ENCODE measurements at regions of chr11 and their contacts with region 1.

Region 1: DNA sequence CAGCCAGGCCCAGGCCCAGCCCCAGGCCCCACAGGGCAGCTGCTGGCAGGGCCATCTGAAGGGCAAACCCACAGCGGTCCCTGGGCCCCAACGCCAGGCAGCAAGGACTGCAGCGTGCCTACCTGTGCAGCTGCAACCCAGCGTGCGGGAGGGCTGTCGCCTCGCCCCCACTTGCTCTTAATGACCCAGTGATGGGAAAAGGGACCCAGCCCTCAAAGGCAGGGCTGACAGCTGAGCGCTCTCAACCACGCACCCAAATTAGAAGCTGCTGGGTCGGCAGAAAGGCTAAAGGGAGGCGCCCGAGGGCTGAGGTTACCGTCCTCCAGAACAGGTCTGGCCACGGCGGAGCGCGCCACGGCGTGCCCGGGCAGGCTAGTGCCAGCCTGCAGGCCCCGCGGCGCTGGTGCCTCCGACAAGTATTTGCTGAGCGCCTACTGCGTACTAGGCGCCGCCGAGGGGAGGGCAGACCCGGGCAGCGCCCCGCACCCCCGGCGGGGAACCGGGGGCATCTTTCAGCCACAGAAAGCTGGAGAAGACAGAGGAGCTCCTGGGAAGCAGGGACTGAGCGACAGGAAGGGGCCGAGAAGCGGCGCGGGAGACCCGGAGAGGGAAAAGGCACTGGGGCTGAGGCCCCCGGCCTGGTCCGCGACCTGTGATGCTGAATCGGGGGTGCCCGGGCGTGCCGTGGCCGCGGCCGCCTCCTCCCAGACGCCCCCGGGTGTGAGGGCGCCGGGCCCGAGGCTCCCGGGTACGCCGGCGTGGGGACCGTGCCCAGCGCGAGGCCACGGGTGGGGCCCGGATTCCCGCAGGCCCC is 773 bp downstream of the HRAS start:
- DNase-seq: peak; percentile 79
- H3K27ac ChIP-seq: peak overlapping the region; percentile 99
- CTCF ChIP-seq: no peak

Region 2: DNA sequence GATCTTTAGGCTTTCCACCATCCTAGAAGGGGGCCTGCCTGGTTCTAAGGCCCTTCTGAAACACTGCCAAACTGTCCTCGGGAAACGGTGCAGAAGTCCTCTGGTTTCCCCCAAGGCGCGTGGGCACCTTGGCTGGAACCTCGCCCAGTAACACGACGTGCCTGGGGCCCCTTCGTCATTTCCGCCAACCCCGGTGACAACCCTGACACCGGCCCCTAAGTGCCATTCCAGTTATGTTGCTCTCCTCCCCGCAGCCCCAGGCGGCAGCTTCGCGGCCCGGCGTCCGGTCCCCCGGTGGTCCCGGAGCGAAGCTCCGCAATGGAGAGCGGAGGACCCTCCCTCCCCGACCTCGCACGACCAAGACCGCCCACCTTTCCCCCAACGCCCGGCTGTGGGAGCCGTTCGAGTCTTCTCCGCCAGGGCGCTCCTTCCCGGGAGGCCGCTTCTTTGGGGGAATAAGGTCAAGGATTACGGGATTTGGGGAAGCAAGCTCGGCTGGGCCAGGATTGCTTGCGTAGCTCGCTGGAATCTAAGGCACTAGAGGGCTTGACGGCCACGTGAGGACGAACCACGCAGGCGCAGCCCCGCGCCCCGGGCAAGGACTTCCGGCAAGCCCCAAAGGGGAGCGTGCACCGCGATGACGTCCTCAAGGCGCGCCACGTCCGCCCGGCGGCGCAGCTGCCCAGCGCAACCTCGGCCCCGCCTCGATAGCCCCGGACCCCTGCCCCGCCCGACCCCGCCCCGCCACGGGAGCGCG is 28.2 kb before region 1 on chr11:
- CTCF ChIA-PET with region 1: no interaction called
- POLR2A ChIA-PET with region 1: interaction called, 10 read pairs
- DNase-seq: peak; percentile 93
- H3K27ac ChIP-seq: peak overlapping the region; percentile 98
- CTCF ChIP-seq: no peak

Region 3: DNA sequence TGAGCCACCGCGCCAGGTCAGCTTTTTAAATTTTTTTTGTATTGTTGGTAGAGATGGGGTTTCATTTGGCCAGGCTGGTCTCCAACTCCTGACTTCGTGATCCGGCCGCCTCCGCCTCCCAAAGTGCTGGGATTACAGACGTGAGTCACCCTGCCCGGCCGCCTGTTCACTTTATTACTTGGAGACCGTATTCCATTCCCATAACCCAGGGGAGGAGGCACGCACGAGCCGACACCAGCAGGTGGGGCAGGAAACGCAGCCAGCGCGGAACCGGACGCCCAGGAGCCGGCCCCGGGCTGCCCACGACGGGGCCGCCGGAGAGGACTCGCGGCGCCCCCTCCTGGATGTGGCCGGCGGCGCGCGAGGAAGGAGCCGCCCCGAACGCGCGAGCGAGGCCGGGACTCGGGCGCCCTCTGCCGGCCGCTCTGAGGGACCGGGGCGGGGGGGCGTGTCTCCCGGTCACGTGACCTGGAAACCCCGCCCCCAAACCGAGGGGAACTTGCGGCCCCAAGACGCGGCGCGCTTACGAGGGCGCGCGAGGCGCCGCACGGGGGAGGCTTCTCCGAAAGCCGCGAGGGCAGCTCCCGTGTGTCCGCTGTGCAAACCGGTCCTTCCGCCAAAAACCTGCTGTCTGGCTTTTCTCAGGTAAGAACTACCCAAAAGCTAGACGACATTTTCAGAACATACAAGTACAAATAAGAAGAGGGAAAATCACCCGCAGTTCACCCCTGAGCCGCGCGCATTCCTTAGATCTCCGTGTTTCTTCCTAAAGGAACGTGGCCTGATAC is 15.9 kb before region 1 on chr11:
- CTCF ChIA-PET with region 1: interaction called, 15 read pairs
- POLR2A ChIA-PET with region 1: no interaction called
- DNase-seq: peak; percentile 91
- H3K27ac ChIP-seq: peak overlapping the region; percentile 97
- CTCF ChIP-seq: peak; percentile 100

Region 4: DNA sequence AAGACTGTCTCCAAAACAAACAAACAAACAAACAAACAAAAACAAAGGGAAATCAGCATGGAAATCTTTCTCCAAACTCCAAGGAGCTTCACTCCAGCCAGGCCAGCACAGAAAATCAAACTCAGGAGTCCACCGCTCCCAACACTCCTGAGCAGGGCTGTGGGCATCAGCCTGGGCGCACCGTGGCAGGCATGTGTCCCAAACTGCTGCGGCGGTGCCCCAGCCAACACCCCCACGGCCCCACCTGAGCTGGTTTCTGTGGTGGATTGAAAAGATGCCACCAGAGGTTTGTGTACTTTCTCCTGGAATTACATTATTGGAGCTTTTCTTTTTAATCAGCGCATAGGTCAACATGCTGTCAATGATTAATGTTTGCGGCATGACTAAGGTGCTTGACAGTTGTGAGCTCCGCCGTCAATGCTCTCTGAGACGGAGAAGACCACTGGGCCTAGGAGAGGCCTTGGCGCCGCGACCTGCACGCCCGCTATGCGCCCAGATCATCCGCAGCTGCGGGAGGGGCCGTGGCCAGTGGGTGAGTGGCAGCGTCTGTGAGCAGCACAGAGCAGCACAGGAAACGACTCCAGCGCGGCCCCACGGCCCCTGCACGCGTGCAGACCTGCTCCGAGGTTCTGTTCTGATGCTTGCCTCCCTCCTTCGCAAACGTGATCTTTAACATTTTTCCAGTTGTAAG is 120.6 kb after region 1 on chr11:
- CTCF ChIA-PET with region 1: no interaction called
- POLR2A ChIA-PET with region 1: no interaction called
- DNase-seq: no peak
- H3K27ac ChIP-seq: peak overlapping the region; percentile 87
- CTCF ChIP-seq: no peak

Region 5: DNA sequence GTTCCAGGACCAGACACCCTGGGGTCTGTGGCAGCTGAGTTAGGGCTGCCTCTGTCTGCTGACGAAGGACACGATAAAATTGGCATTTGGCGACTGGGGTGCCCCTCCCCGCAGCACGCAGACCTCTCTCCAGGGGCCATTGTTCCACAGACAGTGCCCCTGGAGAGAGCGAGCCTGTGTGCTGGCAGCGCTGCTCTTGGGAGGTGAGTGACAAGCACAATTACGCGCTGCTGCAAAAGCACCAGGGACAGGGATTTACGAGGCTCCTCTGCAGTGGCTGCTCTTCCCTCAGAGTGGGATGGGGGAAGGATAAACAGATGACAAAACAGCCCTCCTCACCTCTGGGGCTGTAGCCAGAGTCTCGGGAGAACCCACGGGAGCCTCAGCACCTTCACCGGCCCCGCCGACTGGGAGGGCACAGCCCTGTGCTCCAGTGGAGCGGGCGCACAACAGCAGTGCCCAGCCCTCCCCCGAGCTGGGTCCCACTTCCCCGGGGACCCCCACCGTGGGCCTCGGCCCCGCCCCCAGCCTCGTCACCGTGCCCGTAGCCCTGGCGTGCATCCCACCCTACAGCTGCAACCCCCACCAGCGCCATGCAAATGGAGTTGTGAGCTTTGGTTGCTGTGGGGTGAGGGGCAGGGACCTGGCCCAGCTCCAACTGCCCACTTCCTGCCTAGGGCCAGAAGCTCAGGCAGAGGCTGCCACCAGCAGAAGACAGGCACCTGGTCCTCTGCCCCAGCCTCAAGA is 356.4 kb after region 1 on chr11:
- CTCF ChIA-PET with region 1: no interaction called
- POLR2A ChIA-PET with region 1: no interaction called
- DNase-seq: no peak
- H3K27ac ChIP-seq: no peak overlapping the region
- CTCF ChIP-seq: no peak